PC-3 (cell line): ENCODE measurements at regions of chr3 and their contacts with region 1.

Region 1: GRCh38 chr3:160163229-160163878 is 61.9 kb upstream of the C3orf80 start:
- DNase-seq: peak; percentile 46
- ATAC-seq: peak; percentile 54; the same call in 1 of the 2 replicates
- H3K4me3 ChIP-seq: no peak overlapping the region
- H3K27ac ChIP-seq: no peak overlapping the region
- H3K4me1 ChIP-seq: peaks cover 2% of the 10 kb centered on the region; the same call in 1 of the 2 replicates
- H3K27me3 ChIP-seq: no peaks in the 10 kb centered on the region
- CTCF ChIP-seq: peak; percentile 78

Region 2: DNA sequence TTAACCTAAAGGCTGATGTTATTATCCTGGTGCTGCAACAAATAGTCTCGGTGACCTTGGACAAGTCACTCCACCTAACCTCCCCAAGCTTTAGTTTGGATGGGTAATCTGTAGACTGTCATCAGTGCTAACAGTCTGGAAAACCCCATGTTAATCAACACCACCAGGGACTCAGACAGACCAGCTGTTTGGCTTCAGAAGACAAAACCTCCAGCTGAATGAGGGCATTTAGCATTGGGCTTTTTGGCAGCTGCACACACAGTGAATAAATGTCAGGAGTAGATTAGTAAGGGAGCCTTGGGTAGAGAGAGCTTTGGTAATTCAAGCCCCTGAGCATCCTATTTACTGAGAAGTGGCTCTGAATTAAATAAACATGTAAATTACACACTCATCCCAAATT is 37.0 kb after region 1 on chr3:
- CTCF ChIA-PET with region 1: no interaction called
- POLR2A ChIA-PET with region 1: no interaction called
- intact Hi-C with region 1: no loop called
- DNase-seq: no peak
- ATAC-seq: no peak
- H3K4me3 ChIP-seq: no peak overlapping the region
- H3K27ac ChIP-seq: no peak overlapping the region
- H3K4me1 ChIP-seq: no peaks in the 10 kb centered on the region
- H3K27me3 ChIP-seq: 0 out of 2 replicates have a peak, but pooled peaks cover 4% of the 10 kb centered on the region
- CTCF ChIP-seq: no peak

Region 3: DNA sequence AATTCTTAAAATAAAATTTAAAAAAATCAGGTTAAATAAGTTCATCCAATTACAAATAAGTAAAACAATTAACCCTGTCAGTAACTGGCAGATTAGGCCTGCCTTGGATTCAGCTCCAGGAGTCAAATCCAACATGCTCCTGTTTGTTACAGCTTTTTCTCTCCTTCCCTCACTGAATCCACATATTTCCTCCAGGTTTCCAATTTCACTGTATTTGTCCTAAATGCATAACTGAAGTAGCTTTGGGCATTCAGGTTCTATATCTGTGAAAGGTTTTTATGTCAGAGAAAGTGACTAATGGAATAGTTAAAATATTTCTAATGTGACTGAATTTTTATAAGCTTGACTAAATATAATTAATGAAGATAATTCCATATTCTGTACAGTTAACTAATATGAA is 156.0 kb after region 1 on chr3:
- CTCF ChIA-PET with region 1: no interaction called
- POLR2A ChIA-PET with region 1: interaction called, 11 read pairs
- intact Hi-C with region 1: no loop called
- DNase-seq: peak; percentile 27
- ATAC-seq: peak; percentile 94
- H3K4me3 ChIP-seq: no peak overlapping the region
- H3K27ac ChIP-seq: no peak overlapping the region
- H3K4me1 ChIP-seq: peaks cover 6% of the 10 kb centered on the region; the same call in 1 of the 2 replicates
- H3K27me3 ChIP-seq: no peaks in the 10 kb centered on the region
- CTCF ChIP-seq: no peak

Region 4: DNA sequence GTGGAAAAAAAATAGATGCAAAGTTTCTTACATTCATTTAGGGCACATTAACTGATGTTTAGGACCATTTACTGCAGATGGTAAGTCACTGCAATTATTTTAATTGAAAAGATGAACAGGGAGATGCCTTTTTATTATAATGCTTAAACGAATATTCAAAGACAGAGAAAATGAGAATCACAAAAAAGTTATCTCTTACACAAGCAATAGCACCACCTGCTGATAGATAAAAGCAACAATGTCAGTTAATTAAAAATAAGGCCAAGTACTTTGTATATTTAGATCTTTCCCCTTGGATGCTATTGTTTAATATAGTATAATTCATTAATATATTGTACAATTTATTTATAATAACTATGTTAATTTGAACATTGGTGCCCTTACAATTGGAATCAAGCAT is 179.8 kb after region 1 on chr3:
- CTCF ChIA-PET with region 1: interaction called, 3 read pairs
- POLR2A ChIA-PET with region 1: no interaction called
- intact Hi-C with region 1: loop called (anchors 1 kb)
- DNase-seq: peak; percentile 42
- ATAC-seq: no peak
- H3K4me3 ChIP-seq: no peak overlapping the region
- H3K27ac ChIP-seq: no peak overlapping the region
- H3K4me1 ChIP-seq: no peaks in the 10 kb centered on the region
- H3K27me3 ChIP-seq: no peaks in the 10 kb centered on the region
- CTCF ChIP-seq: peak; percentile 60

Region 5: DNA sequence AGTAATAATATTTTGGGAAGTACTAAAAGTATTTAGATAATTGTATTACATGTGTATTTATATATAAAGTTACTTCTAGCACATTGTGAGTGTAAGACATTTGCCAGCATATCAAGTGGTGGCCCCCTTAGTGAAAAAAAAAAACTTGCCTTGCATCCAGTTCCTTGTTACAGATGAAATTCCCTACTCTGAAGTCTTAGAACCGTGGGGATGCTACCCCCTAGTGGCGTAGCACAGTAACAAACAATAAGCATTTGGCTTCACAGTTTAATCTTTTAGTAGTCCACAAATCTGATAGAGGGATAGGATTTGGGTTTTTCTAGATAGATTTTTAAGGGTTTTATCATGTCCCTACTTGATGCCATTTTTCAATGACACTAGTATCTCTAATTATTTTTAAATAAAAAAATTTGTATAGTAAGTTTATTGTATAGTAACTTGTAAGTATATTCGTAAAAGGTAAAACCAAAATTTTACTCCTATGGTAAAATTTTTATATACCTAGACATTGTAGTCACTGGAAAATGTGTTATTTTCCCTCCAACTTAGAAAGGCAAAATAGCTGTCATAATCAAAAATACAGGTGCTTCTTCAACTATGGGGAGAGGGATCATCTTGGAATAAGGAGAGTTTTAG is 250.4 kb after region 1 on chr3:
- CTCF ChIA-PET with region 1: interaction called, 7 read pairs
- POLR2A ChIA-PET with region 1: no interaction called
- intact Hi-C with region 1: loop called (anchors 1 kb)
- DNase-seq: peak; percentile 83
- ATAC-seq: peak; percentile 80
- H3K4me3 ChIP-seq: no peak overlapping the region
- H3K27ac ChIP-seq: no peak overlapping the region
- H3K4me1 ChIP-seq: no peaks in the 10 kb centered on the region
- H3K27me3 ChIP-seq: no peaks in the 10 kb centered on the region
- CTCF ChIP-seq: peak; percentile 89

Region 6: GRCh38 chr3:160475884-160476283 is 312.5 kb after region 1 on chr3:
- CTCF ChIA-PET with region 1: no interaction called
- POLR2A ChIA-PET with region 1: no interaction called
- intact Hi-C with region 1: no loop called
- DNase-seq: no peak
- ATAC-seq: no peak
- H3K4me3 ChIP-seq: no peak overlapping the region
- H3K27ac ChIP-seq: no peak overlapping the region
- H3K4me1 ChIP-seq: no peaks in the 10 kb centered on the region
- H3K27me3 ChIP-seq: no peaks in the 10 kb centered on the region
- CTCF ChIP-seq: no peak

Region 7: DNA sequence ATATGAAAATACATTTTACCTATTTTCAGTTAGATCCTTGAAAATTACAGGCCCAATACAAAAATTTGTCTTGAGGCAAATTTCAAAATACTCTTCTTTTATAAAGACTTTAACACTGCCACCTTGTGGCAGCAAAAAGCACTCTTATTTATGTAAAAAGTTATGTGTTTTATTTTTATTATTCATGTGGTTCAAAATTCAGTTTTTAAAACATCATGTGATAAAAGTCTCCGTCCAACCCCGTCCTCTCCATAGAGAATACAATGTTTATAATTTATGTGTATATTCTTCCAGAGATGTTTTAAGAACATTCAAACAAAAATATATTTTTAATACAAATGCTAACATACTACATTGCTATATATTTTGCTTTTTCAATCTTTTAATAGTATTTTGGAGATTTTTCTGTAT is 323.1 kb after region 1 on chr3:
- CTCF ChIA-PET with region 1: no interaction called
- POLR2A ChIA-PET with region 1: no interaction called
- intact Hi-C with region 1: loop called (anchors 1 kb)
- DNase-seq: peak; percentile 71
- ATAC-seq: peak; percentile 16; the same call in 1 of the 2 replicates
- H3K4me3 ChIP-seq: no peak overlapping the region
- H3K27ac ChIP-seq: no peak overlapping the region
- H3K4me1 ChIP-seq: no peaks in the 10 kb centered on the region
- H3K27me3 ChIP-seq: no peaks in the 10 kb centered on the region
- CTCF ChIP-seq: peak; percentile 78